ENCODE measurements at regions of chr6 and their contacts with region 1.

Region 1: DNA sequence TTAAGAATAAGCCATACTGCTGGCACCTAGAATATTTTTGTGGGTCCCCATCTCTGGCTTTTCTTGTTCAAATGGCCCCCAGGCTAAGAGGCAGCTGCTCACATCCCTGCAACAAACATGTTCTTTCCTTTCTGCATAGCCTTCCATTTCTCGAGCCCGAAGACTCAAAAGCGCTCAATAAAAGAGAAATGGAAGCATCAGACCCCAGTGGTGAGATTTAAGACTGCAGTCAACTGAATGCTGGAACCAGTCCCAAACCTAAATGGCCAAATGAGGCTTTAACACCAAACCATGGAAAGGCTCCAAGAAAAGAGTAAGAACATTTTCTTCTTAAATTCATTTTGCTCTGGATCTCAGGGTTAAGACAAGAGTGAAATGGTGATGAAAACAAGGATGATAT is 122.1 kb upstream of the TRAF3IP2 start:
- DNase-seq: no peak
- H3K4me3 ChIP-seq: no peak overlapping the region
- H3K27ac ChIP-seq: no peak overlapping the region
- H3K4me1 ChIP-seq: no peaks in the 10 kb centered on the region
- H3K27me3 ChIP-seq: no peaks in the 10 kb centered on the region
- CTCF ChIP-seq: peak in 2 of 3 experiments; percentile 21 to 37

Region 2: GRCh38 chr6:111764238-111765175 is 36.7 kb after region 1 on chr6:
- dilution Hi-C with region 1: loop called (anchors 5 kb)
- DNase-seq: no peak
- H3K4me3 ChIP-seq: no peak overlapping the region
- H3K27ac ChIP-seq: no peak overlapping the region
- H3K4me1 ChIP-seq: no peaks in the 10 kb centered on the region
- H3K27me3 ChIP-seq: no peaks in the 10 kb centered on the region
- CTCF ChIP-seq: no peak